Dendritic cell treated with granulocyte-macrophage colony-stimulating factor and Interleukin-4, amounts not matched to agents 40 ng/mL and 50 ng/mL, for 4 days (primary cell): ENCODE measurements at regions of chr2 and their contacts with region 1.

Region 1: DNA sequence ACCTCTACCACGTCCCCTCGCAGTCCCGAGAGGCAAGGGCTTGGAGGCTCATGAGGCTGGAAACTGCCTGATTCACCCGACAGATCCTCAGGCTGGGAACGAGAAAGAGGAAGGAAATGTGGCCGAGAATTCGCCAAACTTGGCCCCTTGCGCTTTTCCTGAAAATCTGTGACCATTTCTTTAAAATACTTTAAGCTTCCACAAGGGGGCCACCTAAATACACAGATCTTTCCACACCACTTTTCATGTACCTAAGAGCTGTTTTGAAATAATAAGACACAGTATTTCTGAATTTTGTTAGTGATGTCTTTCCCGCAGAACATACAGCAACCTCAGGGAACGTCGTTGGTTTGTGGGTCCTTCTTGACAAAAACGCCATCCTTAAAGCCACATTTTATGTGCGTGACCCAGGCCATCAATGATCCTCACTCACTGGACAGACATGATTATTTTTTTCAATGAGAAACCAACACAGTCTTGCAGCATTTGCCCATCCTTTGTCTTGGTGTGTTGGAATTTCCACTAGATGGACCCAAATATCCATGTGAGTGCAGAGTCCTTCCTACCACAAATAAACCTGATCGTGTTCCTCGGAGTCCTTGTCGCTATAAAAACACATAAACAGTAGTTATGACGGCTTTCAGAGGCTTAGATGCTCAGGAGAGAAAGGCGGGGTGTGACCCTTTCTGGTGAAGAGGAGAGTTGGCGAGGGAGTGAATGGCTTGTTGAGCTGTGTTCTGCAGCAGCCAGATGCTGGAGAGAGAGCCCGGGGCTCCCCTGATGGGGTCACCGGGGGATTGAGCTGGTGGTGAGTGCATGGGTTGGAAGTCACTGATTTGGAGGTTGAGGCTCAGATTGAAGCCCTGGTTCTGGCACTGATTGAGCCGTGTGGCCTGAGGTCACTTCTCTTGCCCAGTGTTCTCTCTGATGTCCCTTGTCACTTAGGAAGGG is 25.0 kb downstream of the DCDC2C start:
- H3K4me3 Mint-ChIP-seq: no peak overlapping the region
- H3K27ac Mint-ChIP-seq: no peak overlapping the region
- H3K4me1 Mint-ChIP-seq: no peaks in the 10 kb centered on the region
- H3K27me3 Mint-ChIP-seq: no peaks in the 10 kb centered on the region

Region 2: DNA sequence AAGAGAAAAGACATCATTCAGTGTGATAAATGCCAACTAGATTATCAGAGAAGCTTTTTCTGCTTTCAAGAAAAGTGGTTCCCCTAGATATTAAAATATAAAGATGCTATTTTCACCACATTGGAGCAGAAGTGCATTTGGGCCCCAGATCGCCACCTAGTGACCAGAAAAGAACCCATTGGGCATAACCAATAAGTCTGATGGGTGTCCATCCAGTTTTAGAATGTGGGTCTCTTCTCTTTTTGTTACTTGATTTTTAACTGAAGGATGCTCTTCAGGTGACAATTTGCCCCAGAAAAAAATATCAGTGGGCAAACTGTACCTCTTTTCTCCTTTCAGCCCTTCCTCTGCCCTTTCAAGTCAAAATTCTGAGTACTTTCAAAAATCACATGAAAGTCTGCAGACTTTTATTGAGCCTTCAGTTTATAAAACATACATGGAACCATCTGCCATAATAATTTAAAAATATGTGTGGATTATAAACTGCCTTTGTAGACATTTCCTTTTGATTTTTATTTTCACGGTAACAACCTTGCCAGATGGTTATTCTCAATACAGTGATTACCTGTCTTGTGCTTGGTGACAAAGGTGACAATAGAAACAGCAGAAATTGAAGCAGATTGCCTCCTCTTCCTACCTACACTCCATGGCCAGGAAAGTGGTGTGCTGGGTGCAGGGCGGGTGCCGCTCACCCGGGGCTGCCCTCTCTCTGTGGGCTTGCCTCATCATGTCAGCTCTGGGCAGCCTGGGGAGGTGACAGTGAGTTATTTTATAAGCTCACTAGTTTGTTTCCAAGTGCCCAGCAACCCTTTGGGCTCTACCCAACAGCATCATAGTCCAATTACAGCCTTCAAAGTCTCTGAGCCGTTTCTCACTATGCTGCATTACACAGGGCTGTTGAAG is 99.5 kb after region 1 on chr2:
- intact Hi-C with region 1: loop called (anchors 1 kb)
- H3K4me3 Mint-ChIP-seq: no peak overlapping the region
- H3K27ac Mint-ChIP-seq: no peak overlapping the region
- H3K4me1 Mint-ChIP-seq: no peaks in the 10 kb centered on the region
- H3K27me3 Mint-ChIP-seq: peaks cover 1% of the 10 kb centered on the region

Region 3: GRCh38 chr2:3902131-3902530 is 173.8 kb after region 1 on chr2:
- intact Hi-C with region 1: no loop called
- H3K4me3 Mint-ChIP-seq: no peak overlapping the region
- H3K27ac Mint-ChIP-seq: no peak overlapping the region
- H3K4me1 Mint-ChIP-seq: no peaks in the 10 kb centered on the region
- H3K27me3 Mint-ChIP-seq: peaks cover 4% of the 10 kb centered on the region